ENCODE measurements at regions of chr4 and their contacts with region 1.

Region 1: GRCh38 chr4:146522098-146522868 is 543 bp upstream of the SLC10A7 start:
- DNase-seq: peak; percentile 88
- H3K4me3 Mint-ChIP-seq: no peak overlapping the region
- H3K27ac Mint-ChIP-seq: peak overlapping the region; percentile 54
- H3K4me1 Mint-ChIP-seq: peaks cover 24% of the 10 kb centered on the region
- H3K27me3 Mint-ChIP-seq: no peaks in the 10 kb centered on the region

Region 2: DNA sequence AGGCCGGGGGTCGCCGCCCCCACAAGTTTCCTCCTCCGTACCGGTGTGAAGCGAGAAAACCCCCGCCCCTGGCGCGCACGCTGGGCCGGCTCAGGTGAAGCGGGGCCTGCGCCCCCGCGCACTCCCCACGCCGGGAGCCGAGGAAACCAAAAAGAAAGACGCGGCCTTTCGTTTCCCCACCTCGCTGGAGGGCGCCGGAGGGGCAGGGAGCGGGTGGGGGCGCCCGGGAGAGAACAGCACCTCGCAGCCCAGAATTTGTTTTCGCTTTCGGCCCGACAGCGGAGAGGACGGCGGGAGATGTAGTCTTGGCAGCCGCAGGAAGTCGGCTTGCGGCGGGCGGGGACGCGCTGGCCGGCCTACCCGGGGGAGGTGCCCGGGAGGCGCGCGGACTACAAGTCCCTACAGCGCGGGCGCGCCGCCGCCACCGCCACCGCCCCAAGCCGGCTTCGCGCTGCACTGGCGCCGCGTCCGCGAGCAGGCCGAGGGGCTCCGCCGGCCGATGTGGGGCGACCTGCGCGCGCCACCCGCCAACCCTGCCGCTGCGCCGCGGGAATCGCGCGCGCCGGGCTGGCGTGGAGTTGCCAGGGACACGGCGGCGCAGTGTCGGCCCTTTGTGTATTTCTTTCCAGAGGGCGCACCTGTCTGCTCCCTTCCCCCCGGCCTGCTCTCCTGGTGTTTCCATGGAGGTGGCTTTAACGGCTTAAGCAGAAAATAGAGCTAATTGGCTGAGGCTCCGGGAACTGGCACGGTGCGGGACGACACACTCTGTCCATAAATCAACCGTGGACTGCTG is 1341.8 kb before region 1 on chr4 and contains the start of gene OTUD4:
- CTCF ChIA-PET with region 1: no interaction called
- intact Hi-C with region 1: loop called (anchors 2 kb)
- DNase-seq: peak; percentile 96
- H3K4me3 Mint-ChIP-seq: peak within 1 kb of the TSS; percentile 93
- H3K27ac Mint-ChIP-seq: peak within 1 kb of the TSS; percentile 98
- H3K4me1 Mint-ChIP-seq: peaks cover 29% of the 10 kb centered on the region
- H3K27me3 Mint-ChIP-seq: no peaks in the 10 kb centered on the region
- total RNA-seq, gene OTUD4: 35.9 to 37.1 TPM

Region 3: GRCh38 chr4:145732895-145733880 is 789.1 kb before region 1 on chr4:
- CTCF ChIA-PET with region 1: no interaction called
- intact Hi-C with region 1: loop called (anchors 5 kb)
- DNase-seq: peak; percentile 91
- H3K4me3 Mint-ChIP-seq: peak overlapping the region; percentile 75
- H3K27ac Mint-ChIP-seq: peak overlapping the region; percentile 36
- H3K4me1 Mint-ChIP-seq: peaks cover 7% of the 10 kb centered on the region
- H3K27me3 Mint-ChIP-seq: peaks cover 10% of the 10 kb centered on the region

Region 4: DNA sequence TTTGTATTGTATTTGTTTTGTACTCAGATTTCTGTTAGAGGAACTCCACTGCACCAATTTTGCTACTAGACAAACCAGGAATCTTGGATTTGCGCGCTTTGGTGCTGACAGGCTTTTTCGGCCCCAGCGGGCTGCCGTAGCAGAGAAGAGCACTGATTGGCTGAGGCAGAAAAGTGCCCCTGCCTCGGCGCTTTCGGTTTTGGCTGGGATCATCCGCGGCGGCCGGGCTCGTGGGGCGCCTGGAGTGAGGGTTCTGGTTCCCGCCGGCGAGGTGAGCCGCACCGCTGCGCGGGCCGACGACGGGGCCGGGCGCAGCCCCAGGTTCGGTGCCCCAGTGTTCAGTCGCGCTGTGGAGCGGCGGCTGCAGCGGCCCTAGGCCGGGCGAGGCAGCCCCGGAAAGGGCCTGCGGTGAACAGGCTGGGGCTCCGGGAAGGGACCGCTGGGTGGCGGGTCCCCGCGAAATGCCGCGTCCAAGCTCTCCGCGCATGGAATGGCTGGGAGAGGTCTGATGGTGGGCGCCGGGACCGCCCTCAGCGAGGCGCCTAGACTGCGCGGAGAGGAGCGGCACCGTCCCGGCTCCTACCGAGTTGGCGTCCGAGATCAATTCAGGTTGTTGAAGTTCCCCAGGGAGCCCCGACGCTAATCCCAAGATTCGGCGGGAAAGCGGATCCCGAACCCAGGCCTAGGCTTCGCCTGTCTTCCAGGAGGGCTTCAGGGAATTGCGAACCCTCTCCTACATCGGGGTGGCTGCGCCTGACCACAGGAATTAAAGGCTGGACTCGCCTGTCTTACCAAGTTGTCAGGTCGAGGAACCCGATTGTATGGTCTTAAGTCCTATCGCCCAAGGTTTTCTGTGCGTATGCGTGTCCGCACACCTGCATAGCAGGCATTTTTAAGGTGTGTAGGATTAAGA is 346.5 kb before region 1 on chr4 and contains the start of gene LSM6:
- CTCF ChIA-PET with region 1: no interaction called
- intact Hi-C with region 1: loop called (anchors 5 kb)
- DNase-seq: peak; percentile 89
- H3K4me3 Mint-ChIP-seq: peak within 1 kb of the TSS; percentile 80
- H3K27ac Mint-ChIP-seq: peak within 1 kb of the TSS; percentile 90
- H3K4me1 Mint-ChIP-seq: peaks cover 48% of the 10 kb centered on the region
- H3K27me3 Mint-ChIP-seq: no peaks in the 10 kb centered on the region
- total RNA-seq, gene LSM6: 62.9 to 65.8 TPM

Region 5: GRCh38 chr4:146342600-146343192 is 179.6 kb before region 1 on chr4:
- CTCF ChIA-PET with region 1: interaction called, 7 read pairs
- intact Hi-C with region 1: loop called (anchors 2 kb)
- DNase-seq: peak; percentile 59
- H3K4me3 Mint-ChIP-seq: no peak overlapping the region
- H3K27ac Mint-ChIP-seq: no peak overlapping the region
- H3K4me1 Mint-ChIP-seq: peaks cover 7% of the 10 kb centered on the region
- H3K27me3 Mint-ChIP-seq: no peaks in the 10 kb centered on the region

Region 6: GRCh38 chr4:146359771-146360170 is 162.5 kb before region 1 on chr4:
- CTCF ChIA-PET with region 1: no interaction called
- intact Hi-C with region 1: no loop called
- DNase-seq: no peak
- H3K4me3 Mint-ChIP-seq: no peak overlapping the region
- H3K27ac Mint-ChIP-seq: no peak overlapping the region
- H3K4me1 Mint-ChIP-seq: no peaks in the 10 kb centered on the region
- H3K27me3 Mint-ChIP-seq: no peaks in the 10 kb centered on the region

Region 7: DNA sequence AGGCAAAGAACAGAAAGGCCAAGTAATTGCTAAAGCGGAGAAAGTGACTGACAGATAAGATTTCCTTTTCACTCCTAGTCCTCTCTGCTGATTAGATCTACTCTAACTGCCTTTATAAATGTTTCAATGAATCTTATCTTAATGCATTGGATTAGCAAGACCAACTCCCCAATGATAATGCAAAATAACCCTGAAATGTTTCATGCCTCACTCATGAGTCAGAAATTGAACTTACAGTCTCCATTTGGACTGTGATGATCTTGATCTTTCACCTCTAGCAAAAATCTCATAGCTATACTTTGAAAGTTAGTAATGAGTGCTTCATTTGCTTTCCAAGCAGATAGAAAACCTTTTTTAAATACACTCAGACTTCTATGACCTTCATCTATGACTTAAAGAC is 27.0 kb before region 1 on chr4:
- CTCF ChIA-PET with region 1: no interaction called
- intact Hi-C with region 1: loop called (anchors 2 kb)
- DNase-seq: no peak
- H3K4me3 Mint-ChIP-seq: no peak overlapping the region
- H3K27ac Mint-ChIP-seq: no peak overlapping the region
- H3K4me1 Mint-ChIP-seq: peaks cover 17% of the 10 kb centered on the region
- H3K27me3 Mint-ChIP-seq: no peaks in the 10 kb centered on the region

Region 8: GRCh38 chr4:146916479-146917076 is 394.3 kb after region 1 on chr4:
- CTCF ChIA-PET with region 1: no interaction called
- intact Hi-C with region 1: loop called (anchors 10 kb)
- DNase-seq: peak; percentile 28
- H3K4me3 Mint-ChIP-seq: no peak overlapping the region
- H3K27ac Mint-ChIP-seq: no peak overlapping the region
- H3K4me1 Mint-ChIP-seq: no peaks in the 10 kb centered on the region
- H3K27me3 Mint-ChIP-seq: peaks cover 4% of the 10 kb centered on the region

Measured in activated naive CD4-positive, alpha-beta T cell treated with anti-CD3 and anti-CD28 coated beads for 36 hours (primary cell).